Caco-2 (cell line): ENCODE measurements at regions of chr12 and their contacts with region 1.

Region 1: GRCh38 chr12:122951979-122952892 is 14.0 kb downstream of the ABCB9 start:
- DNase-seq: peak; percentile 73 to 76
- H3K4me3 ChIP-seq: no peak overlapping the region
- H3K4me3 Mint-ChIP-seq: no peak overlapping the region
- H3K27ac Mint-ChIP-seq: no peak overlapping the region
- H3K4me1 ChIP-seq: peaks cover 10% of the 10 kb centered on the region; the same call in 1 of the 2 replicates
- H3K4me1 Mint-ChIP-seq: peaks cover under 1% of the 10 kb centered on the region
- H3K27me3 ChIP-seq: no peaks in the 10 kb centered on the region
- H3K27me3 Mint-ChIP-seq: no peaks in the 10 kb centered on the region
- CTCF ChIP-seq: peak; percentile 76 to 88

Region 2: DNA sequence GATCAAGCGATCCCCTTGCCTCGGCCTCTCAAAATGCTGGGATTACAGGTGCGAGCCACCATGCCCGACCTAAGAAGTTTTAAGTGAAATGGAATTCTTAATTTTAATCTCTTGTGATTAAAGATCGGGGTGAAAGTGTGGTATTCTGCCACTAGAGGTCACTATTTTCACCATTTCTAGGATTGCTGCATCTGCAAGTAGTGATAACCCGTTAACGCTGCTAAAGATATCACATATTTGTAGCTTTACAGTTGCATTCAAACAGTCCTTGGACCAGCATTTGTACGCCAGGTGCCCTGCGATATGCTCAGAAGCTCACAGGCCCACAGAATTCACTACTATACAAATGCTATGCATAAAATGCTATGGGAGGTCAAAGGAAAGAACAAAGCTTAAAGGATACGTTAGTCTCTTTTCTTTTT is 158.5 kb before region 1 on chr12:
- CTCF ChIA-PET with region 1: interaction called, 4 read pairs
- POLR2A ChIA-PET with region 1: no interaction called
- intact Hi-C with region 1: loop called (anchors 1 kb)
- DNase-seq: peak in 1 of 2 experiments; percentile 34
- H3K4me3 ChIP-seq: no peak overlapping the region
- H3K4me3 Mint-ChIP-seq: no peak overlapping the region
- H3K27ac Mint-ChIP-seq: no peak overlapping the region
- H3K4me1 ChIP-seq: no peaks in the 10 kb centered on the region
- H3K4me1 Mint-ChIP-seq: no peaks in the 10 kb centered on the region
- H3K27me3 ChIP-seq: no peaks in the 10 kb centered on the region
- H3K27me3 Mint-ChIP-seq: no peaks in the 10 kb centered on the region
- CTCF ChIP-seq: peak; percentile 62 to 77

Region 3: GRCh38 chr12:122860346-122861090 is 91.7 kb before region 1 on chr12:
- CTCF ChIA-PET with region 1: interaction called, 6 read pairs
- POLR2A ChIA-PET with region 1: no interaction called
- intact Hi-C with region 1: loop called (anchors 1 kb)
- DNase-seq: peak; percentile 78 to 83
- H3K4me3 ChIP-seq: no peak overlapping the region
- H3K4me3 Mint-ChIP-seq: no peak overlapping the region
- H3K27ac Mint-ChIP-seq: no peak overlapping the region
- H3K4me1 ChIP-seq: peaks cover 8% of the 10 kb centered on the region; the same call in 1 of the 2 replicates
- H3K4me1 Mint-ChIP-seq: no peaks in the 10 kb centered on the region
- H3K27me3 ChIP-seq: no peaks in the 10 kb centered on the region
- H3K27me3 Mint-ChIP-seq: no peaks in the 10 kb centered on the region
- CTCF ChIP-seq: peak; percentile 85 to 93

Region 4: DNA sequence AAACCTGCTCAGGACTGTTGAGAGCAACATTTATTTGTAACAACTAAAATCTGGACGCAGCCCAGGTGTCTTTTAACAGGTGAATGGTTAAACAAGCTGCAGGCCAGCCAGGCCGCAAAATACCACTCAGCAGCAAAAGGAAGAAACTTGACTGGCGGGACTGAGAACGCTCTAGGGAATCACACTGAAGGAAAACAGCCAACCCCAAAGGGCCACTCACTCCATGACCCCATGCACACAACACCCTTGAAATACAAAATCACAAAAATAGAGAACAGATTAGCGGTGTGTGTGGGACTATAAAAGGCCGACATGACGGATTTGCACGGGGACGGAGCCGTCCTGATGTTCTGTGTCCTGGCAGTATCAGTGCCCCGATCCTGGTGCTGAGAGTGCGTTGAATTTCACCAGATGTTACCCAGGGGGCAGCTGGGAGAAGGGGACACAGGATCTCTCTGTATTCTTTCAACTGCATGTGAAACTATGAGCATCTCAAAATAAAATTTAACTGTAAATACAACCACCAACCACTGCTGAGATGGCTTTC is 79.3 kb before region 1 on chr12:
- CTCF ChIA-PET with region 1: interaction called, 12 read pairs
- POLR2A ChIA-PET with region 1: no interaction called
- intact Hi-C with region 1: no loop called
- DNase-seq: no peak
- H3K4me3 ChIP-seq: no peak overlapping the region
- H3K4me3 Mint-ChIP-seq: no peak overlapping the region
- H3K27ac Mint-ChIP-seq: no peak overlapping the region
- H3K4me1 ChIP-seq: no peaks in the 10 kb centered on the region
- H3K4me1 Mint-ChIP-seq: peaks cover 13% of the 10 kb centered on the region
- H3K27me3 ChIP-seq: no peaks in the 10 kb centered on the region
- H3K27me3 Mint-ChIP-seq: no peaks in the 10 kb centered on the region
- CTCF ChIP-seq: no peak

Region 5: DNA sequence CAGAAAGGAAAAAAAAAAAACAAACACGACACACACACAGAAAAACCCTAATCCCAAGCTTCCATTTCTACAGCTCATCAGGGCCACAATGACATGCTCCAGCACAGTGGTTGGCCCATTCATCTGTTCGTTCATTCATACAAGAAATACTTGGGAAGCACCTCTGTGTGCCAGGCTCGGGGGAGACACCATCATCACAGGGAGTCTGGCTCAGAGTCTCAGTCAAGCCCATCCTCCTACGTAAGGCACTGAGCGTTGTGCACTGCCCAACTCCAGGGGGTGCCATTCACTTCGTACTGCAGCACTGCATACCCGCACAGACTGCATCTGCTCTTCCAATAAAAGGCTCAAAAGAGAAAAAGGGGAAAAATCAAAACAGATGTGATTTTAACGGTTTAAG is 71.6 kb before region 1 on chr12:
- CTCF ChIA-PET with region 1: no interaction called
- POLR2A ChIA-PET with region 1: no interaction called
- intact Hi-C with region 1: loop called (anchors 1 kb)
- DNase-seq: no peak
- H3K4me3 ChIP-seq: no peak overlapping the region
- H3K4me3 Mint-ChIP-seq: no peak overlapping the region
- H3K27ac Mint-ChIP-seq: no peak overlapping the region
- H3K4me1 ChIP-seq: peaks cover 15% of the 10 kb centered on the region
- H3K4me1 Mint-ChIP-seq: peaks cover 6% of the 10 kb centered on the region
- H3K27me3 ChIP-seq: no peaks in the 10 kb centered on the region
- H3K27me3 Mint-ChIP-seq: no peaks in the 10 kb centered on the region
- CTCF ChIP-seq: peak in 1 of 2 experiments; percentile 30